Gastrocnemius medialis (tissue), 4 donors: ENCODE measurements at regions of chr12 and their contacts with region 1.

Region 1: DNA sequence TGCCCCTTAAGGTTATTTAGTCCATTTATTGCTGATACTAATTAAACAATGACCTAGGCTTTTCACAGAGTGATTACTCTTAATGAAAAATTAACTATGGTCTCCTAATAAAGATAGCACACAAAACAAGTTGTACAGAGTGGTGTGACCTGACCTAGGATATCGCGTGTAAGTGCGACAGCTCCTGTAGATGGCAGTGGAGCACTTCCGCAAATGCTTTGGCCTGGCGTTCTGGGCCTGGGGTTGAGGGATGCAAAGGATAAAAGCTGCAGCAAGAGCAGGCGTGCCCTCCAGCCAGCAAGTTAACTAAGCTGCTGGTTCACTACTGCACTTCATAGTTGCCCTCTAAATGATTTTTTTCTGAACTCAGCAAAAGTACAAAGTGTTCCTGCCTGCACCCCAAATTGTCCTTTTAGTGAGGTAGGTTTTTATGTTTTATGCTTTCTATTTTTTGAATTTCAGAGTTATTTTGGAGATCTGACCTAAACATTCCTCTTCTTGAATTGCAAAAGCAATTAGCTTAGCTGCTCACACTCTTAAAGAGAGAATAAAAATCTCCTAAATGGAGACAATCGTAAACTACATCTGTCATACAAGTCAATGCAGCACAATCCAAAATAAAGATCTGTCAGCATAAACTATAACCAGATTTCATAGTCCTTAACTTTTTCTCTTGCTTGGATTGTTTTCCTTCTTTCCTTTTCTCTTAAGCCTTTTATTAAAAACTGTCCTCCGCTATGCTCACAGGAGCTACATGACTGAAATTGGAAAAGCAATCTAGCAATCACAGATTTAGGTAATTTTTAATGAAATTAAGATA is 379.6 kb downstream of the LRIG3 start:
- DNase-seq: peak; percentile 14 to 58
- ATAC-seq: peak; percentile 52 to 88
- H3K4me3 ChIP-seq: no peak overlapping the region
- H3K27ac ChIP-seq: no peak overlapping the region
- H3K4me1 ChIP-seq: no peaks in the 10 kb centered on the region
- H3K27me3 ChIP-seq: no peaks in the 10 kb centered on the region
- CTCF ChIP-seq: peak; percentile 42 to 77 (median 55)
- POLR2A ChIP-seq: no peak

Region 2: DNA sequence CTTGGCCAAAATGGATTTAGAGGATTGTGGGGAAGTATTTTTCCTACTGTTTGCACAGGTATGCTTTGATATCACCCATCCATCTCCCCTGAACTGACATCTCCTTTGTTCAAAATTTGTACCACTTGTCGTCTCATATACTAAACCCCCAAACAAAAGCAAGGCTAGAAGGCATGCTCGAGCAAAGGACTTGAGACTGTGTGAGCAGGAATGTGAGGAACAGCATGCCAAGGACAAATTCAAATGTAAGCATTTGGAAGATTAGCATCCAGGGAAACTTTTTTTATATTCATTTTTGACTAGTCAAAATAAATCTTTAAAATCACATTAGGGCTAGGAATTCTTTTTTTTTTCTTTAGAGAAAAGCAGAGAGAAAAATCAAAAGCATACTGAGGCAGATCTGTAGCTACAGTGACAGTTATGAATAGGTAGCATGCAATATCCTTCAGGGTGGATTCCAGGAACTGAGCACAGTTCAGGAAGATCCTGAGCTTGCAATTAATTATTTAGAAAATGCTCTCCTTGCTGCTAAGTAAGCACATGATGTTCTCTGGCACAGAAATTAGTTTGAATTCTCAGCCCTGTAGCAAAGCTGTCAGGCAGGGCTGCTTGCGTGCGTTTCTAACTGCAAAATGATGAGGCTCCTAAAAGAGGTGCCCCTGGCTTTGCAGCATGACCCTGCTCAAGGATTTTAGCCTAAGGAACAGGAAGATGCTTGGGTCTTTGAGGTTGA is 52.0 kb after region 1 on chr12:
- in situ Hi-C with region 1: no loop called
- intact Hi-C with region 1: no loop called
- DNase-seq: no peak
- ATAC-seq: no peak
- H3K4me3 ChIP-seq: no peak overlapping the region
- H3K27ac ChIP-seq: no peak overlapping the region
- H3K4me1 ChIP-seq: no peaks in the 10 kb centered on the region
- H3K27me3 ChIP-seq: no peaks in the 10 kb centered on the region
- CTCF ChIP-seq: no peak
- POLR2A ChIP-seq: no peak

Region 3: GRCh38 chr12:59158066-59158465 is 617.4 kb after region 1 on chr12:
- in situ Hi-C with region 1: loop called (anchors 5 to 25 kb)
- intact Hi-C with region 1: no loop called
- DNase-seq: no peak
- ATAC-seq: no peak
- H3K4me3 ChIP-seq: no peak overlapping the region
- H3K27ac ChIP-seq: no peak overlapping the region
- H3K4me1 ChIP-seq: no peaks in the 10 kb centered on the region
- H3K27me3 ChIP-seq: no peaks in the 10 kb centered on the region
- CTCF ChIP-seq: no peak
- POLR2A ChIP-seq: no peak